ENCODE measurements at regions of chr6 and their contacts with region 1.

Region 1: GRCh38 chr6:151677404-151677803 is 130.1 kb upstream of the ESR1 start:
- DNase-seq: no peak
- H3K4me3 ChIP-seq: no peak overlapping the region
- H3K27ac ChIP-seq: no peak overlapping the region
- H3K27me3 ChIP-seq: peaks cover 3% of the 10 kb centered on the region
- CTCF ChIP-seq: no peak

Region 2: GRCh38 chr6:152117156-152118133 is 440.0 kb after region 1 on chr6:
- CTCF ChIA-PET with region 1: interaction called, 10 read pairs
- POLR2A ChIA-PET with region 1: no interaction called
- DNase-seq: no peak
- H3K4me3 ChIP-seq: no peak overlapping the region
- H3K27ac ChIP-seq: no peak overlapping the region
- H3K27me3 ChIP-seq: no peaks in the 10 kb centered on the region
- CTCF ChIP-seq: no peak

Measured in AG04450 (cell line).